ENCODE measurements at regions of chr10 and their contacts with region 1.

Region 1: DNA sequence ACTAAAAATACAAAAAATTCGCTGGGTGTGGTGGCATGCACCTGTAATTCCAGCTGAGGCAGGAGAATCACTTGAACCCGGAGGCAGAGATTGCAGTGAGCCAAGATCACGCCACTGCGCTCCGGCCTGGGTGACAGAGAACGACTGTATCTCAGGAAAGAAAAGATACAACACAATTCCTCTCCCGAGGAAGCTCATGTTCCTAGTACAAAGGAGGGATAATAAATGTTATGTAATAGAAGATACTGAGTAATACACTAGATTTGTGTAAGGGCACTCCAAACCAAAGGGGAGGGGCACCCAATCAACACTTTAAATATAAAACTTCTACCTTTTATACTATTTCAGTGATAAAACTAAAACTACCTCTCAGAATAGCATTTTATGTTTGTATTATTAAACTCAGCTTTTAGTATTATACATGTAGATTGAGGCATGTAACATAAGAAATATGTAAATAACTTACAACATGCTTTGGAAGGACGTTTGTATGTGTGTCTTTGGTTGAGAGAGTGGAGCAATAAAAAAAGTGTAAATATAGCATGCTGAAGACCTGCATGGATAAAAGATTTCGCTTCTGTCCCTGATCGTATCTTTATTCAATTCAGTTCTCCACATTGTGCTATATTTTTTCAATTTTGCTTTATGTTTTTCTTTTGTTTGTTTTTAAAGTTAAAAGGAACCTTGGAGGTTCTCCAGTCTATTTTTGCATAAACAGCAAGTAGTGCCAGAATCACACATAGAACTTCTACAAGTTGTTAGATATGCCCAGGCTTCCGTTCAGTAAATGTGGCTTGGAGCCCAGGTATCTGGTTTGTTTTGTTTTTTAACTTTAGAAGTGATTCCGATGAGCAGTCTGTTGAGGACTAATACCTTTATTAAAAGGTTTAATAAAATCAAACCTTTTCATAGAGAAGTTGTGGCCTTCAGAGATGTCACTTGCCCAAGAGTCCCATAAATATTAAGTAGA is 71.9 kb downstream of the WAC start:
- DNase-seq: no peak
- H3K4me3 ChIP-seq: no peak overlapping the region
- H3K27ac ChIP-seq: no peak overlapping the region
- H3K4me1 ChIP-seq: peaks cover 12% of the 10 kb centered on the region
- CTCF ChIP-seq: no peak

Region 2: GRCh38 chr10:28620251-28620650 is 15.4 kb after region 1 on chr10:
- CTCF ChIA-PET with region 1: no interaction called
- POLR2A ChIA-PET with region 1: interaction called, 16 read pairs
- intact Hi-C with region 1: no loop called
- DNase-seq: no peak
- H3K4me3 ChIP-seq: no peak overlapping the region
- H3K27ac ChIP-seq: no peak overlapping the region
- H3K4me1 ChIP-seq: no peaks in the 10 kb centered on the region
- CTCF ChIP-seq: no peak

Region 3: DNA sequence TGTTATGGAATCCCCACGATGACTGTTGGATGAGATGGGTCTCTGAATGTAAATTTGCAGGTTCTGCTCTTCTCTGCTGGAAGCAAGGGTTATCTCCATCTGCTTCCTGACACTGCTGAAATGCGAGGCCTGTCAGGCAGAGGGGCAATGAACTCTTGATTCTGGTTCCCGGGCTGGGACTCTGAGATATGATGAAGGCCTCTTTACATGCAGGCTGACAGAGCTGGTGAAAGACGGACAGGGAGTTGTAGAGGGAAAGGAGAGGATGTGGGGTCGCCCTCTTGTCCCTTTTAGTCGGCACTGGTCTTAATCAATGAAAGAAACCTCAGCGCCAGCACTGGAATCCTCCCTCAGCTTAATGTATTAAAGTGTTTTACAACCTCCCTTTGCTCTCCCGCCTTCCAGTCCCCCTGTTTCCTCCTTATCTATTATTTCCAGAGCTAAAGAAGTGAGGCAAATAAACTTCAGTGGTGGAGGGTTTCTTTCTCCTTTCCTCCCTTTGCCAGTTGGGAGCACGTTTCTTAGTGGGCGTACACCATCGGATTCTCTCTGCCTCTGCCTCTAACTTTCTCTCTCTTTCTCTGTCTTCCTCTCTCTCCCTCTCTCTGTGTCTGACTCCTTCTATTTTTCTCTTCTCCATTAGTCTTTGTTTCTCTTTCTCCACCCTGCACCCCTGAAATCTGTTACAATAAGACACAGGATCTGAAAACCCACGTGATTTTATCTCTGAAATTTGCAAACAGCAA is 218.0 kb after region 1 on chr10:
- CTCF ChIA-PET with region 1: no interaction called
- POLR2A ChIA-PET with region 1: no interaction called
- intact Hi-C with region 1: no loop called
- DNase-seq: no peak
- H3K4me3 ChIP-seq: no peak overlapping the region
- H3K27ac ChIP-seq: no peak overlapping the region
- H3K4me1 ChIP-seq: no peaks in the 10 kb centered on the region
- CTCF ChIP-seq: no peak

Measured in OCI-LY7 (cell line).